Left ventricle myocardium superior (tissue), 1 donor: ENCODE measurements at regions of chr18 and their contacts with region 1.

Region 1: DNA sequence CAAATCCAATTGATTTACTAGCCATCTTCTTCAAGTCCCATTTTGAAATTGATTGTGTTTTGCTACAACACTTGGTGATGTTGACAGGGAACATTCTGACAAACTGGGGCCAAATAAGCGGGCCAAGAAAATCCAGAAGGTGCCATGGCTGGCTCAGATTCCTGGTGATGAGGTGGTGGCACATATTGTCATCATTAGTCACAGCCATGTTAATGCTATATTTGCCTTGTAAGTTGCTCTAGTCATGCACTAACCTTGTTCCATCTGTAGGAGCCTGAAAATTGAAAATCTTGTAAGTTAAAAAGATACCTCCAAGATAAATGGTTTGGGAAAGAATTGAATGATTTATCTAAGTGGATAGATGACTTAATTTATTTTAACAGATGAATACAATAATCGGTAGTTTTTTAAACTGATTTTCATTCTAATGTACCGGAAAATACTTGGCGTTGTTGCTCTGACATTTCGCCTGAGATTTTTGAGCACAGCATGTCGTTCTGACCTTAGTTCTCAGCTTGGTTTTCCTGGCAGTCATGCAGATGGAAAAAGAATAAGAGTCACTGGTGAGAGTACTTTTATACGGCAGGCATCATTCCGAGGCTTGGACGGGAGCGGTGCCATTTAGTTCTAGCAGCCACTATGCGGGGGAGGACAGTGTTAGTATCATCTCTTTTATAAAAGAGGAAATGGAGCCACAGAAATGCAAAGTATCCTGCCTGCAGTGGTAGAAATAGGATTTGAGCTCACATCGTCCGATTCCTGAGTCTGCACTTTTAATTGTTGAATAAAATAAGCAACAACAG is 133.9 kb downstream of the ZNF532 start:
- DNase-seq: peak; percentile 78
- ATAC-seq: peak; percentile 89

Region 2: DNA sequence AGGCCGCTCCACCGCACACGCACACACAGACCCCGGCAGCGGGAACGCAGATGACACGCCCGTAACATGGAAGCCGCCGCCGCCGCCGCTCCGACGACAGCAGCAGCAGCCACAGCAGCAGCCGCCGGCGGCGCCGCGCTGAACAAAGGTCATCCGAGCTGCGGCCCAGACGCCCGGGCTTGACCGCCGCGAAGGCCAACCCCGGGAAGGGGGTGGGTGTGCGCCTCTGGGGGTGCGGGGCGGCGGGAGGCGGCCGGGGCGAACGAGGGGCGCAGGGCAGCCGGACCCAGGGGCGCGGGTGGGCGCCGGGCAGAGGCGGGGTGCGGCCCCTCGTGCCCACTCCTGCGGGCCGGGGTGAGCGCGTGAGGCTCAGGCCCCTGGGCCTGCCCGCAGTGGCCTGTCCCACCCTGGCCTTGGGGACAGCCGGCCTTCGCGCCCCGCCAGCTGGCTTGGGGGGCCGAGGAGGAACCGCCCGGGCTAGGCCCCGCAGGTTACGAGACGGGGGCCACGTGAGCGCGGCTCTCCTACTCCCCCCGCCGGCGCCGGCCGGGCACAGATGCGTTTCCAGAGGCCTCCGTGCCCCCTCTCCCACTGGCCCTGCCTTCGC is 135.0 kb before region 1 on chr18:
- intact Hi-C with region 1: loop called (anchors 10 kb)
- DNase-seq: peak; percentile 77
- ATAC-seq: peak; percentile 66

Region 3: DNA sequence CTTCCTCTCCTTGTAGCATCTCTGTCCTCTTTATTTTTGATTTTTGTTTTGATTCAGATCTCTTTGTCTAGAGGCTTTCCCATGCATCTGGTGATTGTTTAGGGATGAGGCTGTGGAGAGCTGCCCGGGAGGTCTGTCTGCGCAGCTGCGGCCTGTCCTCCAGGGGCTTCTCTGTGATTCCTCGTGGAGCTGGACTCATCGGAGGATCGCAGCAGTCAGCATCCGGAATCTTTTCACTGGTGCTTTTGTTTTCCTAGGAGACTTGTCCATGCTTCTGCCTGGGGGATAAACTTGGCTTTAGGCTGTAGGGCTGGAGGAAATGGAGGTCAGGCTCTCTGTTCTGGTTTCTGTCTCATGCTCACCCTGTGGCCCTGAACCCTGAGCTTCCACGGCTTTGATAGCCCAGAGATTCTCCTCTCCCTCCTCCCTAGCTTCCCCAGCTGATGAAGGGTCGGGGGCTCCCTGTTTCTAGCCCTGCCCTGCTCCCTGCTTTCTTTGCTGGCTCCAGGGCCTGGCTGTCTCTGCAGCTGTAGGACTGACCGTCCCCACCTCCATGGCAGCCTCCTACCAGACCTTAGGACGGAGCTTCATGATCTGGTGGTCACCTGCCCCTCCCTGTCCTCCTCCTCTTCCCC is 98.5 kb before region 1 on chr18:
- intact Hi-C with region 1: no loop called
- DNase-seq: peak; percentile 62
- ATAC-seq: peak; percentile 82